Mammary epithelial cell (primary cell): ENCODE measurements at regions of chr5 and their contacts with region 1.

Region 1: DNA sequence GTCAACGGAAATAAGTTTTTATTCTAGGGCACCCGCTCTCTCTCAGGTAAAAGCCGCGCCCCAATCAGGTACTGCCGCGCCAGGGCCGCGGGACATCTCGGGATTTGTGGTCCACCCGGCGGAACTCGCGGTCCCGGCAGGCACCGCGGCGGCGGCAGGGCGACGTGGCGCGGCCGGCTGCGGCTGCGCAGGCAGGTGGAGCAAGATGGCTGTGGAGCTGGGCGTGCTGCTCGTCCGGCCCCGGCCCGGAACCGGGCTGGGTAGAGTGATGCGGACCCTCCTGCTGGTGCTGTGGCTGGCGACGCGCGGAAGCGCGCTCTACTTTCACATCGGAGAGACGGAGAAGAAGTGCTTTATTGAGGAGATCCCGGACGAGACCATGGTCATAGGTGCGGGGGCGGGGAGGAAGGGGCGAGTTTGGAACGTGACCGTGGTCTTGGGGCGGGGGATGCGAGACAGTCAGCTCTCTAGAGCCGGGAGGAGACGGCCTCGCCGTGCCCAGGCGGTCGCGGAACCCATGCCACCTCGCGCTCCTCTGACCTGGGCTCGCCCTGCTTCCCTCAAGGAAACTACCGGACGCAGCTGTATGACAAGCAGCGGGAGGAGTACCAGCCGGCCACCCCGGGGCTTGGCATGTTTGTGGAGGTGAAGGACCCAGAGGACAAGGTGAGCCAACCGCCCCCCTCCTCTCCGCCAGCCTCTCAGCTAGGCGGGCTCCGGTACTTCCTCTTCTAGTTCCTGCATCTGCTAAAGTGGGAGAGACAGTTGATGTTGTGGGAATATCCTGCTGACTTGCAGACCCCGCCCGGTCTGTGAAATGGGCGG is at the start of gene TMED9:
- DNase-seq: peak; percentile 91
- H3K4me3 ChIP-seq: peak within 1 kb of the TSS; percentile 94 to 98 (median 97)
- H3K27ac ChIP-seq: peak within 1 kb of the TSS; percentile 65
- H3K4me1 ChIP-seq: peaks cover 6% of the 10 kb centered on the region
- H3K27me3 ChIP-seq: no peaks in the 10 kb centered on the region
- CTCF ChIP-seq: peak in 1 of 2 donors; percentile 8
- total RNA-seq, gene TMED9: 139 to 275 TPM

Region 2: GRCh38 chr5:176490301-176490700 is 1101.9 kb before region 1 on chr5:
- CTCF ChIA-PET with region 1: no interaction called
- dilution Hi-C with region 1: no loop called
- in situ Hi-C with region 1: no loop called
- intact Hi-C with region 1: no loop called
- DNase-seq: no peak
- H3K4me3 ChIP-seq: no peak overlapping the region
- H3K27ac ChIP-seq: no peak overlapping the region
- H3K4me1 ChIP-seq: peaks cover 23% of the 10 kb centered on the region
- H3K27me3 ChIP-seq: no peaks in the 10 kb centered on the region
- CTCF ChIP-seq: peak in 1 of 2 donors; percentile 15

Region 3: GRCh38 chr5:177098470-177099141 is 493.6 kb before region 1 on chr5:
- CTCF ChIA-PET with region 1: no interaction called
- dilution Hi-C with region 1: no loop called
- in situ Hi-C with region 1: no loop called
- intact Hi-C with region 1: no loop called
- DNase-seq: no peak
- H3K4me3 ChIP-seq: no peak overlapping the region
- H3K27ac ChIP-seq: no peak overlapping the region
- H3K4me1 ChIP-seq: no peaks in the 10 kb centered on the region
- H3K27me3 ChIP-seq: no peaks in the 10 kb centered on the region
- CTCF ChIP-seq: no peak

Region 4: GRCh38 chr5:177479774-177480173 is 112.4 kb before region 1 on chr5:
- CTCF ChIA-PET with region 1: no interaction called
- dilution Hi-C with region 1: loop called (anchors 10 kb)
- in situ Hi-C with region 1: no loop called
- intact Hi-C with region 1: no loop called
- DNase-seq: no peak
- H3K4me3 ChIP-seq: no peak overlapping the region
- H3K27ac ChIP-seq: no peak overlapping the region
- H3K4me1 ChIP-seq: peaks cover 9% of the 10 kb centered on the region
- H3K27me3 ChIP-seq: no peaks in the 10 kb centered on the region
- CTCF ChIP-seq: no peak

Region 5: DNA sequence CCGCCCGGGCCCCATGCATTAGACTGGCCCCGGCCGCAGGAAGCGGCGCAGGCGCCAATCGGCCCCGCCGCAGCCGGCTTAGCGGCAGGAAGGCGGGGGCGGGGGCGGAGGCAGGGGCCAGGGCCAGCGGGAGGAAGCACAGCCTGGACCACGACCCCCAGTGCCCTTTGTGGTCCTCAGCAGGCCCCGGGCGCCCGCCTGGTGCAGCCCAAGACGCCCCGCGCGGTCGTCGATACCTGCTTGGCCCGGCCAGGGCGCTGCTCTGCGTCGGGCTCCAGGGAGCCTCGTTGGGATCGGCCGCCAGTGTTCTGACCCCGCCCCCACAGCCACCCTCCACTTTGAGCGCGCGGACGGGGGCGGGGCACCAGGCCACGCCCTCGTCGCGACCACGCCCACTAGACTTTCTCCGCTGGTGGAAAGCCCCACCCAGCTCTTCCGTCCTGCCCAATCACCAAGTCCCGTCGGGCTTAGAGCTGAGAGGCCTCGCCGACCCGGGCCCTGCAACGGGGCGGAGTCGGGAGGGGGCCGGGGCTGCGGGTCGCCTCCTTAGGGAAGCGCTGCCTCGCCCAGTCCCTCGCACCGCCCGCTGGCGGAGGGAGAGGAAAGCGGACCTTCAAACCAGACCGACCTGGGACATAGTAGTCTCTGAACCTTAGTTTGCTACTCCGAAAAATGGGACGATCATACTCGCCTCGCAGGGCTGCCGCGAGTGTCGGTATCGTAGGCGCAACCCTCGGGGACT is 94.8 kb before region 1 on chr5 and contains the start of gene PDLIM7:
- CTCF ChIA-PET with region 1: no interaction called
- dilution Hi-C with region 1: no loop called
- in situ Hi-C with region 1: no loop called
- intact Hi-C with region 1: loop called (anchors 5 kb)
- DNase-seq: peak; percentile 95
- H3K4me3 ChIP-seq: peak within 1 kb of the TSS; percentile 73 to 80 (median 74)
- H3K27ac ChIP-seq: peak within 1 kb of the TSS; percentile 37
- H3K4me1 ChIP-seq: peaks cover 61% of the 10 kb centered on the region
- H3K27me3 ChIP-seq: no peaks in the 10 kb centered on the region
- CTCF ChIP-seq: peak in 1 of 2 donors; percentile 14
- total RNA-seq, gene PDLIM7: 235 to 259 TPM

Region 6: GRCh38 chr5:177509991-177510566 is 82.1 kb before region 1 on chr5:
- CTCF ChIA-PET with region 1: no interaction called
- dilution Hi-C with region 1: loop called (anchors 5 kb)
- in situ Hi-C with region 1: no loop called
- intact Hi-C with region 1: no loop called
- DNase-seq: no peak
- H3K4me3 ChIP-seq: no peak overlapping the region
- H3K27ac ChIP-seq: no peak overlapping the region
- H3K4me1 ChIP-seq: no peaks in the 10 kb centered on the region
- H3K27me3 ChIP-seq: no peaks in the 10 kb centered on the region
- CTCF ChIP-seq: no peak

Region 7: GRCh38 chr5:177516604-177517568 is 75.3 kb before region 1 on chr5 and contains the start of gene DDX41:
- CTCF ChIA-PET with region 1: no interaction called
- dilution Hi-C with region 1: loop called (anchors 5 kb)
- in situ Hi-C with region 1: no loop called
- intact Hi-C with region 1: loop called (anchors 2 kb)
- DNase-seq: peak; percentile 99
- H3K4me3 ChIP-seq: peak within 1 kb of the TSS; percentile 57 to 100 (median 86)
- H3K27ac ChIP-seq: peak within 1 kb of the TSS; percentile 54
- H3K4me1 ChIP-seq: peaks cover 14% of the 10 kb centered on the region
- H3K27me3 ChIP-seq: no peaks in the 10 kb centered on the region
- CTCF ChIP-seq: peak in 1 of 2 donors; percentile 20
- total RNA-seq, gene DDX41: 60.7 to 80.6 TPM

Region 8: DNA sequence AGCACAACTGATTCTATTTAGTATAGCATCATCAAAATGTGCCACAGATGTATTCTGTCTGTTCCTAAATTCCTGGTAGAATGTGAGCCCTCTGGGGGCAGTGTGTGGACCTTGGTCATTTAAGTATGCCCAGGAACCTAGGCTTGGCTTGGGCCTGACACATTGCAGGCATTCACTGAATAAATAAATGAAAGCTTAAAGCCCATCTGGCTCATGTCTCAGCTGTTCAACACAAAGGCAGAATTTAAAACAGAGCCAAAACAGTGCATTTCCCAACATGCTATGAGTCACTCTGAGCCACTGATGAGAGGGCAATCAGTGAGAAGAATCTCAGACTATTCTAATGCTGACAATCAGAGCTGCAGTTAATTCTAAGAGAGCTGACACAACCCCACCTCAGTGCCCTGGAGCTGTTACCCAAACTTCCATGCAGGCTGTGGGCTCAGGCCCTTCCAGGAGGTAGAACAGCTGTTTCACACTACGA is 45.9 kb before region 1 on chr5:
- CTCF ChIA-PET with region 1: no interaction called
- dilution Hi-C with region 1: loop called (anchors 5 kb)
- in situ Hi-C with region 1: no loop called
- intact Hi-C with region 1: loop called (anchors 5 kb)
- DNase-seq: peak; percentile 99
- H3K4me3 ChIP-seq: no peak overlapping the region
- H3K27ac ChIP-seq: peak overlapping the region; percentile 85
- H3K4me1 ChIP-seq: peaks cover 28% of the 10 kb centered on the region
- H3K27me3 ChIP-seq: no peaks in the 10 kb centered on the region
- CTCF ChIP-seq: peak in 1 of 2 donors; percentile 8

Region 9: GRCh38 chr5:177576169-177576568 is 16.1 kb before region 1 on chr5:
- CTCF ChIA-PET with region 1: interaction called, 17 read pairs
- dilution Hi-C with region 1: no loop called
- in situ Hi-C with region 1: no loop called
- intact Hi-C with region 1: no loop called
- DNase-seq: peak; percentile 12
- H3K4me3 ChIP-seq: no peak overlapping the region
- H3K27ac ChIP-seq: no peak overlapping the region
- H3K4me1 ChIP-seq: peaks cover 10% of the 10 kb centered on the region
- H3K27me3 ChIP-seq: no peaks in the 10 kb centered on the region
- CTCF ChIP-seq: no peak